Naive thymus-derived CD4-positive, alpha-beta T cell (primary cell): ENCODE measurements at regions of chr5 and their contacts with region 1.

Region 1: GRCh38 chr5:149960272-149961185 is at the start of gene SLC26A2:
- DNase-seq: peak; percentile 78 to 92 (median 91)
- ATAC-seq: peak; percentile 99
- H3K4me3 ChIP-seq: peak within 1 kb of the TSS; percentile 98
- H3K4me3 Mint-ChIP-seq: peak within 1 kb of the TSS; percentile 90 to 100 (median 96)
- H3K27ac ChIP-seq: peak within 1 kb of the TSS; percentile 77
- H3K27ac Mint-ChIP-seq: peak within 1 kb of the TSS; percentile 94 to 98 (median 97)
- H3K4me1 ChIP-seq: peaks cover 16 to 28% of the 10 kb centered on the region in 2 donors
- H3K4me1 Mint-ChIP-seq: peaks cover 14 to 43% (median 37%) of the 10 kb centered on the region in 7 donors
- H3K27me3 ChIP-seq: no peaks in the 10 kb centered on the region
- H3K27me3 Mint-ChIP-seq: no peaks in the 10 kb centered on the region
- total RNA-seq, gene SLC26A2: 5.2 to 16.5 (median 9.6) TPM

Region 2: GRCh38 chr5:149357370-149358293 is 602.9 kb before region 1 on chr5 and contains the start of gene PCYOX1L:
- CTCF ChIA-PET with region 1: no interaction called
- POLR2A ChIA-PET with region 1: no interaction called
- intact Hi-C with region 1: loop called in 1 of 2 experiments (anchors 5 kb)
- DNase-seq: peak; percentile 88 to 98 (median 94)
- ATAC-seq: peak; percentile 99
- H3K4me3 ChIP-seq: peak within 1 kb of the TSS; percentile 80
- H3K4me3 Mint-ChIP-seq: peak within 1 kb of the TSS; percentile 80 to 99 (median 94)
- H3K27ac ChIP-seq: peak within 1 kb of the TSS; percentile 83
- H3K27ac Mint-ChIP-seq: peak within 1 kb of the TSS; percentile 83 to 96 (median 92)
- H3K4me1 ChIP-seq: peaks cover 15 to 36% of the 10 kb centered on the region in 2 donors
- H3K4me1 Mint-ChIP-seq: peaks cover 41 to 82% (median 65%) of the 10 kb centered on the region in 7 donors
- H3K27me3 ChIP-seq: no peaks in the 10 kb centered on the region
- H3K27me3 Mint-ChIP-seq: no peaks in the 10 kb centered on the region
- total RNA-seq, gene PCYOX1L: 29.7 to 53.7 (median 36.3) TPM

Region 3: DNA sequence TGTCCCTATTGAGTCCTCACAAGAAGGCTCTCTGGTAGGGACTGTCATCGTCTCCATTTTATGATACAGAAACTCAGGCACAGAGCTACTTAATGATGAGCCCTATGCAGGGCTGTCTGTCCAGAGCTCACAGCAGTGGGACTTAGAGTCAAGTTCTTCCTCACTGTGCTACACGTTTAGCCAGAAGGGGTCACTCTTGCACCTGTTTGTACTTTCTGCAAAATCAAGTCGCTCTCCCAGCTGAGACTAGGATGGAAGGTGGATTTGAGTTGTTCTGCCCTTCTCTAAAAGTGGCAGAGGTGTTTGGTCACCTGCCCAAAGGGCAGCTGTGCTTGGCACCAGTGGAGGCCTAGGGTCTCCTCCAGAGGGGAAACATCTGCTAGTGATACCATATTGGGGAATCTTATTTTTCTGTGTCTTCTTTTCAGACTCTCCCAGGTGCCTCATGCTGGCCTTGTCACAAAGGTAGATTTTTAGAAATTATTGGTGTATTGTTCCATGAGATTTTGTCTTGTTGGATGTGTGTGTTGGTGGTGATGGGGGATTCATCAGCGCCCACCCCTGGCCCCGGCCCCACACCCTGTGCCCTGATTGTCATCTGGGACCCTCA is 126.2 kb before region 1 on chr5:
- CTCF ChIA-PET with region 1: interaction called, 5 read pairs
- POLR2A ChIA-PET with region 1: no interaction called
- intact Hi-C with region 1: loop called in 1 of 2 experiments (anchors 1 kb)
- DNase-seq: peak in 8 of 9 donors; percentile 29 to 63 (median 42)
- ATAC-seq: peak; percentile 68
- H3K4me3 ChIP-seq: no peak overlapping the region
- H3K4me3 Mint-ChIP-seq: no peak overlapping the region
- H3K27ac ChIP-seq: no peak overlapping the region
- H3K27ac Mint-ChIP-seq: no peak overlapping the region
- H3K4me1 ChIP-seq: no peaks in the 10 kb centered on the region
- H3K4me1 Mint-ChIP-seq: peaks cover 0 to 9% (median 0%) of the 10 kb centered on the region in 7 donors
- H3K27me3 ChIP-seq: no peaks in the 10 kb centered on the region
- H3K27me3 Mint-ChIP-seq: no peaks in the 10 kb centered on the region

Region 4: DNA sequence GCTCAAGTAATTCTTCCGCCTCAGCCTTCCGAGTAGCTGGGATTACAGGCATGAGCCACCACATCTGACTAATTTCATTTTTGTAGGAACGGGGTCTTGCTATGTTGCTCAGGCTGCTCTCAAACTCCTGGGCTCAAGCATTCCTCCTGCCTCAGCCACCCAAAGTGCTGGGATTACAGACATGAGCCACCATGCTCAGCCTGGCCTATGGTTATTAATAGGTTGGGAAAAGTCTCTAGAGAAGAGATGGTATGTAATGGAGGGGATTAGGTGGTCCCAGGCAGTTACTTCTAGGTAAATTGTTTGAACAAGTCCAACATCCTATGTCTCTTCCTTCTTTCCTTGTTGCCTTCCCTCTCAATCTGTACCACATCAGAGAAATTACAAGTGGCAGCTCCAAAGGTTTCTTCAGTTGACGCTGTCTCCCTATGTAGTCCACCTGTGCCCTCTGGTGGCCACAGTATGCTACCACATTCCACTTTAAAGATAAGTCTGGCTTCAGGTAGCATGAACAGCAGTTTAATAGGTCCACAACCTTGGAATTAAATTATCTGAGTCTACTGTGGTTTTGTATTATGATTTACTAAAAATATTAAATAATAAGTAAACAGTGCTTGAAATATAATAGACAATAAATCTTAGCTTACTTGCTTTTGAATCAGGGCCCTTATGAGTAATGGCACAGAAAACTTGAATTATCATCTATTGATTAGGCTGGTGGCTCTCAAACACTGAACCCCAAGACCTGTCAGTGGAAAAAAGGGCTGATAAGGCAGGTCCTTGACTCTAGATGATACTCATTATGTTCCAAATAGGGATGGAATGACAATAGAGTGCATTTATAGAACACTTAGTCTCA is 30.2 kb after region 1 on chr5:
- CTCF ChIA-PET with region 1: interaction called, 8 read pairs
- POLR2A ChIA-PET with region 1: no interaction called
- intact Hi-C with region 1: loop called (anchors 1 to 2 kb)
- DNase-seq: peak; percentile 28 to 65 (median 57)
- ATAC-seq: peak; percentile 98
- H3K4me3 ChIP-seq: no peak overlapping the region
- H3K4me3 Mint-ChIP-seq: no peak overlapping the region
- H3K27ac ChIP-seq: no peak overlapping the region
- H3K27ac Mint-ChIP-seq: no peak overlapping the region
- H3K4me1 ChIP-seq: no peaks in the 10 kb centered on the region
- H3K4me1 Mint-ChIP-seq: no peaks in the 10 kb centered on the region
- H3K27me3 ChIP-seq: no peaks in the 10 kb centered on the region
- H3K27me3 Mint-ChIP-seq: no peaks in the 10 kb centered on the region

Region 5: DNA sequence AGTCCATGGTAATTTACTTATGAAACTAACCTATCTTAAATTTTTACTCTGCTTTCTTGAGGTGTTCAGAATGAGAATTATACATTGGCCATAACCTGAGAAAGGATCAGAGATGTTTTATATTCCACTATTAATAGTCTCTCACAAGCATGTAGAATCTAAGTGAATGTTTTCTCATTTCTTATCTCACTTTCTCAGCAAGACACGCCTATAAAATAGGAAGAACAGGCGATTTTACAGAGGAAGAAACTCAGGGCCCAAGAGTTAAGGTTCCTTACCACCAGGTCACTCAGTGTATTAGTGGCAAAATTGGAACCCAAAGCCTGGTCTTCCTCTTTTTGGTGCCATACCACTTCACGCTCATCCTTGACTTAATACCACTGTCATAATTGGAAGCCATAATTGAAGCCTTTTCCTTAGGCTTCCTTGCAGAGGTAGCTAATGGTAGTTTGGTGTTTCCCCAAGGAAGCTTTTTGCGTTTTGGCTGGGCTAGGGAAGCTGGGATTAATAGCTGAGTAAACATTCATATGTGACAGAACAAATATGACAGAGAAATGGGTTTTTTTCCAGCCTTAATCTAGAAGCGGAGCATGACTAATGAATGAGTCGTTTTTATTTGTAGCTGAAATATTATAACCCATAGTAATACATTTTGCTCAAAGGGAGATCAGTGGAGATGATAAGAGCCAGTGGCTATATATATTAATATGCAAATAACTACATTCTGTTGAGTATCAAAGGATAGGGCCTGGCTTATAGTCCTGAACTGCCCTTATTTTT is 56.9 kb after region 1 on chr5:
- CTCF ChIA-PET with region 1: no interaction called
- POLR2A ChIA-PET with region 1: no interaction called
- intact Hi-C with region 1: no loop called
- DNase-seq: no peak
- ATAC-seq: no peak
- H3K4me3 ChIP-seq: no peak overlapping the region
- H3K4me3 Mint-ChIP-seq: no peak overlapping the region
- H3K27ac ChIP-seq: no peak overlapping the region
- H3K27ac Mint-ChIP-seq: no peak overlapping the region
- H3K4me1 ChIP-seq: no peaks in the 10 kb centered on the region
- H3K4me1 Mint-ChIP-seq: peaks cover 0 to 24% (median under 1%) of the 10 kb centered on the region in 7 donors
- H3K27me3 ChIP-seq: no peaks in the 10 kb centered on the region
- H3K27me3 Mint-ChIP-seq: no peaks in the 10 kb centered on the region

Region 6: GRCh38 chr5:150449517-150450339 is 489.2 kb after region 1 on chr5 and contains the start of gene RPS14:
- CTCF ChIA-PET with region 1: no interaction called
- POLR2A ChIA-PET with region 1: no interaction called
- intact Hi-C with region 1: loop called in 1 of 2 experiments (anchors 1 kb)
- DNase-seq: peak; percentile 89 to 98 (median 97)
- ATAC-seq: peak; percentile 97
- H3K4me3 ChIP-seq: peak within 1 kb of the TSS; percentile 68
- H3K4me3 Mint-ChIP-seq: peak within 1 kb of the TSS; percentile 89 to 100 (median 96)
- H3K27ac ChIP-seq: peak within 1 kb of the TSS; percentile 100
- H3K27ac Mint-ChIP-seq: peak within 1 kb of the TSS; percentile 97 to 100 (median 100)
- H3K4me1 ChIP-seq: peaks cover 18 to 23% of the 10 kb centered on the region in 2 donors
- H3K4me1 Mint-ChIP-seq: peaks cover 21 to 44% (median 37%) of the 10 kb centered on the region in 7 donors
- H3K27me3 ChIP-seq: no peaks in the 10 kb centered on the region
- H3K27me3 Mint-ChIP-seq: no peaks in the 10 kb centered on the region
- total RNA-seq, gene RPS14: 2,331 to 7,378 (median 6,414) TPM